ENCODE measurements at regions of chr1 and their contacts with region 1.

Region 1: GRCh38 chr1:1906185-1907097 is 8.6 kb upstream of the CALML6 start:
- DNase-seq: peak; percentile 80
- ATAC-seq: peak; percentile 41
- H3K4me3 Mint-ChIP-seq: peak overlapping the region; percentile 14
- H3K27ac Mint-ChIP-seq: no peak overlapping the region
- H3K4me1 Mint-ChIP-seq: peaks cover 13% of the 10 kb centered on the region
- H3K27me3 Mint-ChIP-seq: no peaks in the 10 kb centered on the region
- CTCF ChIP-seq: peak; percentile 96

Region 2: GRCh38 chr1:1788646-1789431 is 117.6 kb before region 1 on chr1:
- CTCF ChIA-PET with region 1: interaction called, 10 read pairs
- POLR2A ChIA-PET with region 1: no interaction called
- intact Hi-C with region 1: no loop called
- DNase-seq: peak; percentile 40
- ATAC-seq: no peak
- H3K4me3 Mint-ChIP-seq: no peak overlapping the region
- H3K27ac Mint-ChIP-seq: peak overlapping the region; percentile 2
- H3K4me1 Mint-ChIP-seq: no peaks in the 10 kb centered on the region
- H3K27me3 Mint-ChIP-seq: no peaks in the 10 kb centered on the region
- CTCF ChIP-seq: no peak

Region 3: GRCh38 chr1:1826356-1827088 is 79.9 kb before region 1 on chr1:
- CTCF ChIA-PET with region 1: interaction called, 17 read pairs
- POLR2A ChIA-PET with region 1: interaction called, 3 read pairs
- intact Hi-C with region 1: no loop called
- DNase-seq: no peak
- ATAC-seq: no peak
- H3K4me3 Mint-ChIP-seq: no peak overlapping the region
- H3K27ac Mint-ChIP-seq: peak overlapping the region; percentile 26
- H3K4me1 Mint-ChIP-seq: peaks cover 45% of the 10 kb centered on the region
- H3K27me3 Mint-ChIP-seq: no peaks in the 10 kb centered on the region
- CTCF ChIP-seq: no peak

Region 4: DNA sequence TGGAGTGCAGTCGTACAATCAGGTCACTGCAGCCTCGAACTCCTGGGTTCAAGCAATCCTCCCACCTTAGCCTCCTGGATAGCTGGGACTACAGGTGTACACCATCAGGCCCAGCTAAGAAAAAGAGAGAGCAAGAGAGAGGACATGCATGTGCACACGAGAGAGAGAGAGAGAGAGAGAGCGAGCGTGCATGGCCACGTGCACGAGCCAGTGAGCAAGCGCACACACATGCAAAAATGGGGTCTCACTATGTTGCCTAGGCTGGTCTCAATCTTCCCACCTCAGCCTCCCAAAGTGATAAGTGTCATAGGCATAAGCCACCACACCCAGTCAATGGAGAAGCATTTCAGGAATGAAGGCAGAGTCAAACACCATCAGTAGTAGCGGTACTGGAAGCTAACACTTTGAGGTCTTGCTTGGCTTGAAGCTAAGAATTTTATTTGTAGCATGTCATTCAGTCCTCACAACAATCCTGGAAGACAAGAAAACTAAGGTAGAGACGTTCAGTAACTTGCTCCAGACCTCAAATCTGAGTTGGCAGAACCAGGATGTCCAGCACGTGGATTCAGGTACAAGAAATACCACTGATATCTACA is 30.0 kb before region 1 on chr1:
- CTCF ChIA-PET with region 1: interaction called, 14 read pairs
- POLR2A ChIA-PET with region 1: interaction called, 4 read pairs
- intact Hi-C with region 1: no loop called
- DNase-seq: no peak
- ATAC-seq: no peak
- H3K4me3 Mint-ChIP-seq: no peak overlapping the region
- H3K27ac Mint-ChIP-seq: peak overlapping the region; percentile 90
- H3K4me1 Mint-ChIP-seq: peaks cover 78% of the 10 kb centered on the region
- H3K27me3 Mint-ChIP-seq: no peaks in the 10 kb centered on the region
- CTCF ChIP-seq: no peak

Region 5: DNA sequence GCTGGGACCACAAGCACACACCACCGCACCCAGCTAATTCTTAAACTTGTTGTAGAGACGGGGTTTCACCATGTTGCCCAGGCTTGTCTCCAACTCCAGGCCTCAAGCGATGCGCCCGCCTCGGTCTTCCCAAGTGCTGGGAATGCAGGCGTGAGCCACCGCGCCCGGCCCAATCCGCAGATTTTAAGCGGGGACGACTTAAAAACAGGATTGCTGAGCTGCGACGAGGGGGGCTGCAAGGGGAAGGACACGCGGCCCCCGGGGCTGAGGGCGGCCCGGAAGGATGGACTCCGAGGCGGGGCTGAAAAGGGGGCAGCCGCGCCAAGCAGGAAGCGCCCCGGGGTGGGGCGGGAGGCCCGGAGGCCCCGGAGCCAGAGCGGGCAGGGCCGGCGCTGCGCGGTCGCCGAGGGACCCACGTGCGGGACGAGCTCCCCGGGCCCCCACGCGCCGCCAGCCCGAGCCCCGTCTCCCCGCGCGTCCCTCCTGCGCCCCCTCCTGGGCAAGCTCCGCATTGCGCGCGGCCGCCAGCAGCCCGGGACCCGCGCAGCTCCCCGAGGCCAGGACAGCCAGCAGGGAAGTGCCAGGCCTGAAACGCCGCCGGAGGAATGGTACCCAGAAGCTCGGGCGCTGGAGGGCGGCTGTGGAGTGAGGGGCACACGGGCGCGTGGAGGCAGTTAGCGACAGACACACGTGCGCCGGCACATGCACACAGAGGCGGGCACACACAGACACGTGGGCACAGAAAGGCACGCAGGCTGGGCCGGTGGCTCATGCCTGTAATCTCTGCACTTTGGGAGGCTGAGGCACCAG is 138.3 kb after region 1 on chr1:
- CTCF ChIA-PET with region 1: interaction called, 31 read pairs
- POLR2A ChIA-PET with region 1: interaction called, 3 read pairs
- intact Hi-C with region 1: no loop called
- DNase-seq: peak; percentile 78
- ATAC-seq: peak; percentile 83
- H3K4me3 Mint-ChIP-seq: peak overlapping the region; percentile 71
- H3K27ac Mint-ChIP-seq: peak overlapping the region; percentile 8
- H3K4me1 Mint-ChIP-seq: peaks cover 22% of the 10 kb centered on the region
- H3K27me3 Mint-ChIP-seq: peaks cover 6% of the 10 kb centered on the region
- CTCF ChIP-seq: peak; percentile 95